Ascending aorta (tissue), 2 donors: ENCODE measurements at regions of chr6 and their contacts with region 1.

Region 1: GRCh38 chr6:121430514-121431460 is 4.7 kb upstream of the GJA1 start:
- DNase-seq: no peak
- H3K4me3 ChIP-seq: peak overlapping the region in 1 of 2 donors; percentile 45
- H3K27ac ChIP-seq: peak overlapping the region; percentile 24 to 28
- H3K4me1 ChIP-seq: peaks cover 0 to 12% of the 10 kb centered on the region in 2 donors
- H3K27me3 ChIP-seq: no peaks in the 10 kb centered on the region
- CTCF ChIP-seq: peak; percentile 52 to 83 (median 67)

Region 2: GRCh38 chr6:121533321-121533841 is 102.6 kb after region 1 on chr6:
- intact Hi-C with region 1: no loop called
- DNase-seq: no peak
- H3K4me3 ChIP-seq: no peak overlapping the region
- H3K27ac ChIP-seq: no peak overlapping the region
- H3K4me1 ChIP-seq: no peaks in the 10 kb centered on the region
- H3K27me3 ChIP-seq: no peaks in the 10 kb centered on the region
- CTCF ChIP-seq: no peak

Region 3: GRCh38 chr6:121780325-121781313 is 349.8 kb after region 1 on chr6:
- intact Hi-C with region 1: loop called (anchors 5 kb)
- DNase-seq: peak; percentile 50 to 94
- H3K4me3 ChIP-seq: no peak overlapping the region
- H3K27ac ChIP-seq: peak overlapping the region; percentile 73 to 75
- H3K4me1 ChIP-seq: peaks cover 0 to 19% of the 10 kb centered on the region in 2 donors
- H3K27me3 ChIP-seq: no peaks in the 10 kb centered on the region
- CTCF ChIP-seq: no peak

Region 4: GRCh38 chr6:121951918-121952379 is 521.2 kb after region 1 on chr6:
- intact Hi-C with region 1: loop called (anchors 5 kb)
- DNase-seq: peak; percentile 48 to 89
- H3K4me3 ChIP-seq: no peak overlapping the region
- H3K27ac ChIP-seq: peak overlapping the region; percentile 60 to 81
- H3K4me1 ChIP-seq: peaks cover 0 to 11% of the 10 kb centered on the region in 2 donors
- H3K27me3 ChIP-seq: no peaks in the 10 kb centered on the region
- CTCF ChIP-seq: no peak

Region 5: GRCh38 chr6:122184401-122184827 is 753.6 kb after region 1 on chr6:
- intact Hi-C with region 1: loop called (anchors 1 kb)
- DNase-seq: no peak
- H3K4me3 ChIP-seq: peak overlapping the region; percentile 39 to 50
- H3K27ac ChIP-seq: no peak overlapping the region
- H3K4me1 ChIP-seq: no peaks in the 10 kb centered on the region
- H3K27me3 ChIP-seq: no peaks in the 10 kb centered on the region
- CTCF ChIP-seq: peak; percentile 27 to 55 (median 36)